Activated CD4-positive, alpha-beta T cell treated with anti-CD3 and anti-CD28 coated beads, Interleukin-2, amount 10 ng/mL, durations not matched to agents 24 days and 14 days (primary cell): ENCODE measurements at regions of chr2 and their contacts with region 1.

Region 1: GRCh38 chr2:73112913-73113633 is at the start of gene RAB11FIP5:
- DNase-seq: peak; percentile 95
- H3K4me3 Mint-ChIP-seq: peak within 1 kb of the TSS; percentile 88
- H3K27ac Mint-ChIP-seq: peak within 1 kb of the TSS; percentile 59
- H3K4me1 Mint-ChIP-seq: peaks cover 25% of the 10 kb centered on the region
- H3K27me3 Mint-ChIP-seq: peaks cover 11% of the 10 kb centered on the region
- total RNA-seq, gene RAB11FIP5: 13.4 and 13.8 TPM in 2 replicates

Region 2: DNA sequence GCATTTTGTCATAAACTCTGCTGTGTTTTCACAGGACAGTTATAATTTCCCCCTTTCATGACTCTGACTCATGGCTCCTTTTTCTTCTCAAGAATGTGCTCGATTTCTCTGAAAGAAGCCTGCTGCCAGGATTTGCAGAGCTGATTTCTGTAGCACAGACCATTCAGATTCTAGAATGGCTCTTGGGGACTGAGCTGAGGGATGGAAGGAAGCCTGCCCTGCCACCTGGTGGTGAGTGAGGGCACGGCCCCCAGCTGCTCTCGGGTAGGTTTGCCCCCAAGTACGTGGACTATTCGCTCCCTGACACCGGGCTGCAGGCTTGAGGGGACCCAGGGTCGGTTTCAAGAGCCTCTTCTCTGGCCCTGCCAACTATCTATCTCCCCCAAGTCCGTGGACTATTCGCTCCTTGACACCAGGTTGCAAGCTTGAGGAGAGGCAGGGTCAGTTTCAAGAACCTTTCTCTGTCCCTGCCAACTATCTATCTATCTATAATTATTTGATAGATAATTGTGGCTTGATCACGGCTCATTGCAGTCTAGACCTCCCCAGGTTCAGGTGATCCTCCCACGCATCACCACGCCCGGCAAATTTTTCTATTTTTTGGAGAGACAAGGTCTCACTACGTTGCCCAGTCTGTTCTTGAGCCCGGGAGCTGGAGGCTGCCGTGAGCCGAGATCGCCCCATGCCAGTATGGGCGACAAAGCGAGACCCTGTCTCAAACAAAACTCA is 99.5 kb after region 1 on chr2:
- intact Hi-C with region 1: loop called (anchors 1 kb)
- DNase-seq: peak; percentile 91
- H3K4me3 Mint-ChIP-seq: no peak overlapping the region
- H3K27ac Mint-ChIP-seq: peak overlapping the region; percentile 34
- H3K4me1 Mint-ChIP-seq: peaks cover 22% of the 10 kb centered on the region
- H3K27me3 Mint-ChIP-seq: peaks cover 6% of the 10 kb centered on the region